MCF 10A (cell line): ENCODE measurements at regions of chr5 and their contacts with region 1.

Region 1: DNA sequence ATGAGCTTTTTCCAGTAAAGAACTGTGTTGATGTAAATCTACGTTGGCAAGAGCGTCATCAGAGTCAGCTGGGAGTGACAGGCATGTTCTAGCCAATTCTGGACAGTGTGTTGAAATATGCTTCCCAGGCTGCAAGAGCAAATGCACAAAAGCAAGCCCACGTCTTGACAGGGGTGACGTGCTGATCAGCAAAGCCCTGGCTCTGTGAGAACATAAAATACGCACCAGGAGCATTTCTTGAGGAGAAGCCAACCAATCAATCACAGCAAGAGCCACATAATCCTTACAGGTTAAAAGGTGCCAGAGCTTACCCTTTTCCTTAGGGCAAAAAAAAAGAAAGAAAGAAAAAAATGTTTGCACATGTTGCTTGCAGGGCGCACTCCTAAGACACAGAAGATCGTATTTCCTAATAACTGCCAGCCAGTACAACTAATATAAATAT is 148.1 kb downstream of the PDE4D start:
- DNase-seq: peak; percentile 99
- H3K4me3 Mint-ChIP-seq: peak overlapping the region; percentile 63
- H3K27ac Mint-ChIP-seq: peak overlapping the region; percentile 99
- H3K4me1 Mint-ChIP-seq: peaks cover 58% of the 10 kb centered on the region
- H3K27me3 Mint-ChIP-seq: no peaks in the 10 kb centered on the region
- CTCF ChIP-seq: no peak

Region 2: GRCh38 chr5:59193616-59194319 is 551.7 kb before region 1 on chr5:
- CTCF ChIA-PET with region 1: no interaction called
- POLR2A ChIA-PET with region 1: interaction called, 4 read pairs
- intact Hi-C with region 1: loop called (anchors 10 kb)
- DNase-seq: peak; percentile 98
- H3K4me3 Mint-ChIP-seq: peak overlapping the region; percentile 55
- H3K27ac Mint-ChIP-seq: peak overlapping the region; percentile 100
- H3K4me1 Mint-ChIP-seq: peaks cover 31% of the 10 kb centered on the region
- H3K27me3 Mint-ChIP-seq: no peaks in the 10 kb centered on the region
- CTCF ChIP-seq: no peak

Region 3: GRCh38 chr5:59732301-59732700 is 13.1 kb before region 1 on chr5:
- CTCF ChIA-PET with region 1: no interaction called
- POLR2A ChIA-PET with region 1: interaction called, 11 read pairs
- intact Hi-C with region 1: no loop called
- DNase-seq: no peak
- H3K4me3 Mint-ChIP-seq: no peak overlapping the region
- H3K27ac Mint-ChIP-seq: no peak overlapping the region
- H3K4me1 Mint-ChIP-seq: peaks cover 17% of the 10 kb centered on the region
- H3K27me3 Mint-ChIP-seq: no peaks in the 10 kb centered on the region
- CTCF ChIP-seq: no peak

Region 4: GRCh38 chr5:59760798-59761348 is 15.4 kb after region 1 on chr5:
- CTCF ChIA-PET with region 1: interaction called, 9 read pairs
- POLR2A ChIA-PET with region 1: interaction called, 223 read pairs
- intact Hi-C with region 1: loop called (anchors 1 kb)
- DNase-seq: peak; percentile 90
- H3K4me3 Mint-ChIP-seq: no peak overlapping the region
- H3K27ac Mint-ChIP-seq: peak overlapping the region; percentile 96
- H3K4me1 Mint-ChIP-seq: peaks cover 43% of the 10 kb centered on the region
- H3K27me3 Mint-ChIP-seq: no peaks in the 10 kb centered on the region
- CTCF ChIP-seq: no peak

Region 5: GRCh38 chr5:59768152-59769040 is 23.0 kb after region 1 on chr5:
- CTCF ChIA-PET with region 1: interaction called, 9 read pairs
- POLR2A ChIA-PET with region 1: interaction called, 223 read pairs
- intact Hi-C with region 1: loop called (anchors 1 kb)
- DNase-seq: peak; percentile 94
- H3K4me3 Mint-ChIP-seq: peak overlapping the region; percentile 98
- H3K27ac Mint-ChIP-seq: peak overlapping the region; percentile 98
- H3K4me1 Mint-ChIP-seq: peaks cover 57% of the 10 kb centered on the region
- H3K27me3 Mint-ChIP-seq: no peaks in the 10 kb centered on the region
- CTCF ChIP-seq: no peak

Region 6: DNA sequence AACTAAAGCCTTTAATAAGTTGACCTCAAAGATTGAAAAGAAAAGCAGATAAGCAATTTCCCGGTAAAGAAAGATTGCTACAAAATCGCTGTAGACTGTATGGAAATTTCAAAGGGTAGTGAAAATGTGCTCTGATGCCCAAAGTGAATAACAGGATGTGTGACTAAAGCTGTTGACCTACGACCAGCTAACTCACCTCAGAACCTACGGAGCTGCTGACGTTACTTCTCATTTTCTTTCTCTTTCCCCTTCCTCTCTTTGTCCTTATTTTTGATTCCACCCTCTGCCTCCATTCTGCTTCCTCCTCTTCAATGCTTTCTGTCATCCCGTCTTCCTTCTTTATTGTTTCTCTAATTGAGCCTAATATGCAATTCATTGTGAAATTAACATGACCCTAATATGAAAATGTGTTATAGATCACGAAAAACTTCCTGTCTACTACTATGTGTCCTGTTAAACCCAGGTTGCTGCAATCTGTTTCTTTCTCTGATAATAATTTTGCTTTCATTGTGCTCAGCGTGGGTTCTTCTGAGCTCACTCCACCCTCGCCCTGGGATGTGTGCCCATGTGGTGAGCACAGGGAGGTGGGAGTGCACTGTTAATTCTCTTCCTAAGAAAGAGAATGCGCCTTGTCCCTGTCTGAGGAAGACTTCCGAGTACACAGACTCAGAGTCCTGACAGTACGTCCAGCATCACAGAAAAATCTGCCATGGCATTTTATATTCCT is 45.1 kb after region 1 on chr5:
- CTCF ChIA-PET with region 1: interaction called, 17 read pairs
- POLR2A ChIA-PET with region 1: interaction called, 125 read pairs
- intact Hi-C with region 1: loop called (anchors 1 kb)
- DNase-seq: peak; percentile 79
- H3K4me3 Mint-ChIP-seq: peak overlapping the region; percentile 52
- H3K27ac Mint-ChIP-seq: peak overlapping the region; percentile 89
- H3K4me1 Mint-ChIP-seq: peaks cover 67% of the 10 kb centered on the region
- H3K27me3 Mint-ChIP-seq: no peaks in the 10 kb centered on the region
- CTCF ChIP-seq: no peak

Region 7: DNA sequence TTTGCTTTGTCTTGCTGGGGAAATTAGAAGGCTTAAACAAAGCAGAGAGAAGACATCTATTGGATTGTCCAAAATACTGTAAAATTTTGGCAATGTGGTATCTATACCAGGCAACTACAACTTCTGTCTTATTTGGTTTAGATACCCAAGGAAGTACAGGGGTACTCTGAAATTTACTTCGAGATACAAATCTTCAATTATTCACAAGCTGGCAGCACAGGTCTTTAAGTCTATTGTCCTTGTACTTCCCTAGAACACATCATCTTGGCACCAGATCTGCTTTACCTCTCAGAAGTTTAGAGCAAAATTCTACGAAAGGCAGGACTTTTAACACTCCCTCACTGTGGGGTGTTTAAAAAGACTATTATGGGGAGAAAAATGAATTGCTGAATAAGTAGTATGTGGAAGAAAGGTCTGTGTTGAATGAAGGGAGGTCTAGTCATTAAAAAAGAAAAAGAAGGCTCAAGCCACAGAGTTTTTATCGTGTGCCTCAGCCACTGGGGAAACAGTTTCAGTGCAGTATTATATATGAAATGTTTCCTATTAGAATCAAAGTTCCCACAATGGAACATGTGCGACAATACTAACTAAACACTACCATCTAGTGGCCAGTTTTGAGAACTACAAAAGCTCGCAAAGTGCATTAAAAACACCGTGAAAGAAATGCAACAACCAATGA is 54.4 kb after region 1 on chr5:
- CTCF ChIA-PET with region 1: interaction called, 3 read pairs
- POLR2A ChIA-PET with region 1: interaction called, 125 read pairs
- intact Hi-C with region 1: loop called (anchors 1 kb)
- DNase-seq: peak; percentile 77
- H3K4me3 Mint-ChIP-seq: no peak overlapping the region
- H3K27ac Mint-ChIP-seq: no peak overlapping the region
- H3K4me1 Mint-ChIP-seq: no peaks in the 10 kb centered on the region
- H3K27me3 Mint-ChIP-seq: no peaks in the 10 kb centered on the region
- CTCF ChIP-seq: peak; percentile 67